Prostate gland (tissue), 2 donors: ENCODE measurements at regions of chr2 and their contacts with region 1.

Region 1: GRCh38 chr2:45821564-45822271 is 170.2 kb downstream of the PRKCE start:
- DNase-seq: peak; percentile 96
- H3K4me3 ChIP-seq: no peak overlapping the region
- H3K27ac ChIP-seq: peak overlapping the region; percentile 62 to 68
- H3K4me1 ChIP-seq: peaks cover 19% of the 10 kb centered on the region
- H3K27me3 ChIP-seq: no peaks in the 10 kb centered on the region
- CTCF ChIP-seq: no peak
- POLR2A ChIP-seq: no peak

Region 2: DNA sequence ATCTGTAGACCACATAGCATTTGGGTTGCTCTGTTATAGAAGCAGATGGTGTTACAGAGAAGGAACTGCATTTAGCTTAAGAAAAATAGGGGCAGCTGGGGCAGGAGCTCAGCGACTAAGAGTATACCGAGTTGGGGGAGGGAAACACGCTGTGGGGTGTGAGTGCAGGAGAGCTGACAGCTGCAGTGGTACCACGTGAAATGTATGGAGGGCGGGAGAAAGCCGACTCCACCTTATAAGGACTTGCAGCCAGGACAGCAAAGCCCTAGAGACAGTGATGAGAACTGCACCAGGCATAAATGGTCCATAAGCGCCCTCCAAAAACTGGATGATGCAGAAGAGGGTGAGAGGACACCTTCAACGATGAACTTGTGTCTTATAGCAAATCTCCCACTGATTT is 67.3 kb after region 1 on chr2:
- intact Hi-C with region 1: loop called (anchors 5 kb)
- DNase-seq: no peak
- H3K4me3 ChIP-seq: no peak overlapping the region
- H3K27ac ChIP-seq: no peak overlapping the region
- H3K4me1 ChIP-seq: peaks cover 5% of the 10 kb centered on the region
- H3K27me3 ChIP-seq: no peaks in the 10 kb centered on the region
- CTCF ChIP-seq: no peak
- POLR2A ChIP-seq: no peak